ENCODE measurements at regions of chr10 and their contacts with region 1.

Region 1: GRCh38 chr10:50362547-50363125 is 111.3 kb upstream of the ASAH2 start:
- DNase-seq: peak; percentile 100
- ATAC-seq: peak; percentile 84
- H3K4me3 ChIP-seq: peak overlapping the region; percentile 12; the same call in 1 of the 2 replicates
- H3K27ac ChIP-seq: peak overlapping the region; percentile 88
- H3K4me1 ChIP-seq: peaks cover 45% of the 10 kb centered on the region
- H3K27me3 ChIP-seq: no peaks in the 10 kb centered on the region
- CTCF ChIP-seq: no peak

Region 2: GRCh38 chr10:50275650-50276235 is 86.9 kb before region 1 on chr10:
- CTCF ChIA-PET with region 1: interaction called, 4 read pairs
- POLR2A ChIA-PET with region 1: no interaction called
- intact Hi-C with region 1: loop called (anchors 1 kb)
- DNase-seq: peak; percentile 86
- ATAC-seq: peak; percentile 87
- H3K4me3 ChIP-seq: no peak overlapping the region
- H3K27ac ChIP-seq: no peak overlapping the region
- H3K4me1 ChIP-seq: peaks cover 6% of the 10 kb centered on the region
- H3K27me3 ChIP-seq: no peaks in the 10 kb centered on the region
- CTCF ChIP-seq: peak; percentile 99

Region 3: DNA sequence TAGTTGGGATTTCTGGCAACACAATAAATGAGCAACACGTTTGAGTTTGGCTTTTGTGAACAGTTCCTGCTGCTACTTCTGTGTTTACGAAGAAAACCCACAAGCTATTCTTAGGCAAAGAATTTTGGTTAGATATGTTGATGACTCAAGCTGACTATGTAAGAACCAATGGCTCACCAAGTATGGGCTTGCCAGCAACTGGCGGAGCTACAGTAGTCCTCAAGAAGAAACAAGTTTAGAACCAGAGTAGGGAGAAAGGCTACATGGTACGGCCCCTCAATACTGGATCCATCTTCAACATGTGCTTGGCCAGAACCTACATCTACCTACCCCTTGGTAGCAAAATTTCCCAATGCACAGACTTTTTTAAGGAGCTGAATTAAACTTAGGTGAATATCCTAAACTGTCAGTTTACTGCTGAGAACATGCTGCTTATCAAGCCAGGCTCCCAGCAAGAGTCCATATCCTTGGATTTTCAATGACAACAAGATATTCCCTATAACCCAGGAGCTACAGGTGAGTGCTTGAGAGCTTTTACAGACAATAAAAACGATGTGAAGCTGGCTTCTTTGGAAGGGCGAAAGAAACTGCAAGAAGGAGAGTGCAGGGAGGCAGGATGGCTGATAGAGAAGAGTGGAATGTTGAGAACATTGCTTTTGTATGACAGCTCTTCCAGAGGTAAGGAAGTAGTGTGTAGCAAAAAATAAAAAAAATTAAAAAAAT is 37.0 kb before region 1 on chr10:
- CTCF ChIA-PET with region 1: interaction called, 10 read pairs
- POLR2A ChIA-PET with region 1: interaction called, 4 read pairs
- intact Hi-C with region 1: loop called (anchors 1 kb)
- DNase-seq: peak; percentile 100
- ATAC-seq: peak; percentile 87
- H3K4me3 ChIP-seq: peak overlapping the region; percentile 36
- H3K27ac ChIP-seq: peak overlapping the region; percentile 69
- H3K4me1 ChIP-seq: peaks cover 42% of the 10 kb centered on the region
- H3K27me3 ChIP-seq: no peaks in the 10 kb centered on the region
- CTCF ChIP-seq: no peak

Region 4: DNA sequence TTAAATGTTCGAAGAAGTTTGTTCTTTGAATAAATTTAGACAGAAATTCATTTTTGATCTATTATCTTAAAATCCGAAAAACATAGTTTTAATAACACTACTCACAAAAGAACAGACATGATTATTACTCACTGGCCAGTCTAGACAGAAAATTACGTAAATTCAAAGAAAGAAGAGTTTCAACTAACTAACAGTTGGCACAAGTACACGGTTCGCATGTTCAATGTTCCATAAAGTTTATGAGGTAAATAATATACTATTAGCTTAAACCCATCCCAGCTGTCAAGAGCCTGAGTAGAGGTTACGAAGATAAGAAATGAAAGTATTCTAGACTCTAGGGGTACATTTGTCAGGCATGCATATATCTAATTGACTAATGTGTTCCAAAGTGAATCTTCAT is 40.4 kb after region 1 on chr10:
- CTCF ChIA-PET with region 1: interaction called, 5 read pairs
- POLR2A ChIA-PET with region 1: no interaction called
- intact Hi-C with region 1: loop called (anchors 2 kb)
- DNase-seq: peak; percentile 63
- ATAC-seq: peak; percentile 54
- H3K4me3 ChIP-seq: no peak overlapping the region
- H3K27ac ChIP-seq: peak overlapping the region; percentile 71
- H3K4me1 ChIP-seq: peaks cover 65% of the 10 kb centered on the region
- H3K27me3 ChIP-seq: no peaks in the 10 kb centered on the region
- CTCF ChIP-seq: no peak

Region 5: GRCh38 chr10:50470345-50470744 is 107.7 kb after region 1 on chr10:
- CTCF ChIA-PET with region 1: interaction called, 7 read pairs
- POLR2A ChIA-PET with region 1: interaction called, 3 read pairs
- intact Hi-C with region 1: loop called (anchors 1 kb)
- DNase-seq: peak; percentile 50
- ATAC-seq: peak; percentile 20
- H3K4me3 ChIP-seq: peak overlapping the region; percentile 36
- H3K27ac ChIP-seq: peak overlapping the region; percentile 88
- H3K4me1 ChIP-seq: peaks cover 41% of the 10 kb centered on the region
- H3K27me3 ChIP-seq: no peaks in the 10 kb centered on the region
- CTCF ChIP-seq: no peak

Region 6: GRCh38 chr10:50496228-50496627 is 133.6 kb after region 1 on chr10:
- CTCF ChIA-PET with region 1: no interaction called
- POLR2A ChIA-PET with region 1: no interaction called
- intact Hi-C with region 1: no loop called
- DNase-seq: no peak
- ATAC-seq: no peak
- H3K4me3 ChIP-seq: no peak overlapping the region
- H3K27ac ChIP-seq: no peak overlapping the region
- H3K4me1 ChIP-seq: peaks cover 13% of the 10 kb centered on the region
- H3K27me3 ChIP-seq: no peaks in the 10 kb centered on the region
- CTCF ChIP-seq: no peak